ENCODE measurements at regions of chr5 and their contacts with region 1.

Region 1: DNA sequence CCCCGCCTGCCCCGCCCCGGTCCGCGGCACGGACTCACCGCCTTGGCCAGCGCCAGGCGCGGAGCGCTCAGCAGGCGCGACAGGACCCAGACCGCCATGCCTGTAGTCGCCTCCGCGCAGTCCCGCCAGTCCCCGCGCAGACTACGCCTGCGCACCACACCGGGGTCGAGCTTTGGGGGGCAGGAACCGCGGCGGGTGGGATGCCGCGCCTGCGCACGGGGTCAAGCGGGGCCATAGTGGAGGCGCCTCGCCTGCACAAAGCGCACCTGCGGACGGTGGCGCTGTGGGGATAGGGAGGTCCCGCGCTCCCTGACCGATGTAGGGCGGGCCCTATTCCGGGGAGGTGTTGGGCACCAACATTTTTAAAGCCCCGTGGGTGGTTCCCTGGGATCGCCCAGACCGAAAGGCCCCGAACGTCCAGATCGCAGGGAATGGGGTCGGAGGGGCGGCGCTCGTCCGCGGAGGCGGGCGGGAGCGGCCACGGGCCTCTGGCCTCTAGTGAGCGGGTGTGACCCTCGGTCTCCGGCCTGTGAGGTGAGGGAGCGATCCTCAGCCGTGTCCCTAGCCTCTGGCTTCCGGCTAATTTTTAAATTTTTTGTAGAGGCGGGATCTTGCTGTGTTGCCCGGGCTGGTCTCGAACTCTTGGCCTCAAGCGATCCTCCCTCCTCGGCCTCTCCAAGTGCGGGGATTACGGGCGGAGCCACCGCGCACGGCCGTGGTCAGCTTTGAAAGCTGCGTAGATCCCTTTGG is 70.8 kb upstream of the LPCAT1 start:
- DNase-seq: peak; percentile 84
- ATAC-seq: peak; percentile 89
- H3K4me3 Mint-ChIP-seq: peak overlapping the region; percentile 67
- H3K27ac Mint-ChIP-seq: peak overlapping the region; percentile 31
- H3K4me1 Mint-ChIP-seq: peaks cover 13% of the 10 kb centered on the region
- H3K27me3 Mint-ChIP-seq: no peaks in the 10 kb centered on the region

Region 2: GRCh38 chr5:231661-232060 is 1362.9 kb before region 1 on chr5:
- CTCF ChIA-PET with region 1: no interaction called
- POLR2A ChIA-PET with region 1: no interaction called
- intact Hi-C with region 1: loop called in 1 of 2 experiments (anchors 5 kb)
- DNase-seq: no peak
- ATAC-seq: peak; percentile 68
- H3K4me3 Mint-ChIP-seq: no peak overlapping the region
- H3K27ac Mint-ChIP-seq: peak overlapping the region; percentile 47
- H3K4me1 Mint-ChIP-seq: peaks cover 5% of the 10 kb centered on the region
- H3K27me3 Mint-ChIP-seq: no peaks in the 10 kb centered on the region

Region 3: DNA sequence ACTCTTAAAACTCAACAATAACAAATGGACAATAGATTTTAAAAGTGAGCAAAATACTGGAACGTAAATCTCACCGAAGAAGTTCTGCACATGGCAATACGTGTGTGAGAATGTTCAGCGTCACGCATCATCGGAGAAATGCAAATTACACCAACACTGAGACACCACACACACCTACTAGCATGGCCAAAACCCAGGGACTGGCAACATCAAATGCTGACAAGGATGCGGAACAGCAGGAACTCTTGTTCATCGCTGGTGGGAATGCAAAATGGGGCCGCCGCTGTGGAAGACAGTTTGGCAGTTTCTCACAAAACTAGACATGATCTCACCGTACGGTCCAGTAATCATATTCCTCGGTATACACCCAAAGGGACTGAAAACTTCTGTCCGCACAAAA is 228.0 kb before region 1 on chr5:
- CTCF ChIA-PET with region 1: no interaction called
- POLR2A ChIA-PET with region 1: no interaction called
- intact Hi-C with region 1: no loop called
- DNase-seq: no peak
- ATAC-seq: no peak
- H3K4me3 Mint-ChIP-seq: no peak overlapping the region
- H3K27ac Mint-ChIP-seq: no peak overlapping the region
- H3K4me1 Mint-ChIP-seq: no peaks in the 10 kb centered on the region
- H3K27me3 Mint-ChIP-seq: peaks cover 6% of the 10 kb centered on the region

Region 4: DNA sequence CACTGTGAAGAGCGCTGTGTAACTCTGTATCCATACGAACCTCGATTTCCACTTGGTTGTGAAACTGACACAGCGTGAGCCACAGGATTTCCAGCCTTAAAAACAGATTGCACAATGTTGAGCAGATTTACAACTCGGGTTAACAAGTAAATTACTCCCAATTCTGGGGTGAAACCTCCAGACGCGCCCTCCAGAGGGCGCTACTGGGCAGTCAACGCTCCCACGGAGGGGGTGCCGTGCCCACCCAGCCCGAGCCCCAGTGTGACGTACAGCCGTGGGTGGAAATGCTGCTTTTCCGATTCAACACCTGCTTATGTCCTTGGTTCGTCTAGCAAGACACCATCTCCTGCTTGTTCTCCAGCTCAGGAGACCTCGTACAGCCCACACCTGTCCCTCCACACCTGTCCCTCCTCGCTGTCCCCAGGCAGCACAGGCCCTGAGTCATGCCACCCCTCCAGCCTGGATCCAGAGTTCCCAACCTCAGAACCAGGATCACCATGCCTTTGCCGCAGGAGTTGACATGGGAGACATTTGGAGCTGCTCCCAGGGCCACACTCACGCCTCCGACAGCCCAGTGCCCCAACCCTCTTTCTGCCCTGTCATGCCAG is 114.8 kb before region 1 on chr5:
- CTCF ChIA-PET with region 1: no interaction called
- POLR2A ChIA-PET with region 1: no interaction called
- intact Hi-C with region 1: loop called in 1 of 2 experiments (anchors 2 kb)
- DNase-seq: peak; percentile 65
- ATAC-seq: peak; percentile 51
- H3K4me3 Mint-ChIP-seq: no peak overlapping the region
- H3K27ac Mint-ChIP-seq: no peak overlapping the region
- H3K4me1 Mint-ChIP-seq: peaks cover 2% of the 10 kb centered on the region
- H3K27me3 Mint-ChIP-seq: no peaks in the 10 kb centered on the region

Region 5: GRCh38 chr5:1652596-1653345 is 58.2 kb after region 1 on chr5:
- CTCF ChIA-PET with region 1: no interaction called
- POLR2A ChIA-PET with region 1: no interaction called
- intact Hi-C with region 1: no loop called
- DNase-seq: peak; percentile 27
- ATAC-seq: no peak
- H3K4me3 Mint-ChIP-seq: peak overlapping the region; percentile 44
- H3K27ac Mint-ChIP-seq: no peak overlapping the region
- H3K4me1 Mint-ChIP-seq: peaks cover 3% of the 10 kb centered on the region
- H3K27me3 Mint-ChIP-seq: peaks cover 25% of the 10 kb centered on the region